Naive thymus-derived CD4-positive, alpha-beta T cell (primary cell): ENCODE measurements at regions of chr19 and their contacts with region 1.

Region 1: DNA sequence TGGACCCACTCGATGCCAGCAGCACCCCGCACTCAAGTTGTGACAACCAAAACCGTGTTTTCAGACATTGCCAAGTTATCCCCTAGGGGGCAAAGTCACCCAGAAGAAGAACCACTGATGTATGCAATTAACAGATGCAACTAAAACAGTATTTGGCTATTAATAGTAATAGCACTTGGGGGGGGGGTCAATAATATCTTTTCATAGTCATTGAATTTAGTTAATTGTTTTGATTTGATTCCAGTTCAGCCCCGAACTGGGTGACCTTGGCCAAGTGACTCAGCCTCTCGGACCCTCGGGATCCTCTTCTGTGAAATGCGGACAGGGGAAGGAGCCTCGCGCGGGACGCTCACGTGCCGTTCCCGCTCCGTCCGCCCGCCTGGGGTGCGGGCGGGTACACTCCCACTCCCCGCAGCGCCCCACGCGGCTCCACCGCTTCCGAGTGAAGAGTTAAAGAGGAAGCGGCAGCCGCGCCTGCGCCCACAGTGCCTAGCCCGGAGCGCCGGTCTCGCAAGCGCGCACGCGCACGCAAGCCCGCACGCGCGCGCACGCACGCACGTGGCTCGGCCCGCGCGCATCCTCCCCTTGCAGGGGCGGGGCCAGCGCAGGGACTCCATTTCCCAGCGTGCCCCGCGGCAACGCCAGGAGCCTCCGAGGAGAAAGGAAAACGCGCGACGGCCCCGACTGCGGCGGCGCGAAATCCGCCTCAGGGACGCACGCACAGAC is 449 bp upstream of the DAZAP1 start:
- DNase-seq: peak; percentile 99 to 100 (median 100)
- ATAC-seq: peak; percentile 93
- H3K4me3 ChIP-seq: peak overlapping the region; percentile 40
- H3K4me3 Mint-ChIP-seq: peak overlapping the region; percentile 72 to 89 (median 80)
- H3K27ac ChIP-seq: peak overlapping the region; percentile 98
- H3K27ac Mint-ChIP-seq: peak overlapping the region; percentile 50 to 93 (median 85)
- H3K4me1 ChIP-seq: peaks cover 38 to 40% of the 10 kb centered on the region in 2 donors
- H3K4me1 Mint-ChIP-seq: peaks cover 33 to 53% (median 45%) of the 10 kb centered on the region in 7 donors
- H3K27me3 ChIP-seq: no peaks in the 10 kb centered on the region
- H3K27me3 Mint-ChIP-seq: peaks cover 0 to 9% (median 0%) of the 10 kb centered on the region in 5 donors

Region 2: DNA sequence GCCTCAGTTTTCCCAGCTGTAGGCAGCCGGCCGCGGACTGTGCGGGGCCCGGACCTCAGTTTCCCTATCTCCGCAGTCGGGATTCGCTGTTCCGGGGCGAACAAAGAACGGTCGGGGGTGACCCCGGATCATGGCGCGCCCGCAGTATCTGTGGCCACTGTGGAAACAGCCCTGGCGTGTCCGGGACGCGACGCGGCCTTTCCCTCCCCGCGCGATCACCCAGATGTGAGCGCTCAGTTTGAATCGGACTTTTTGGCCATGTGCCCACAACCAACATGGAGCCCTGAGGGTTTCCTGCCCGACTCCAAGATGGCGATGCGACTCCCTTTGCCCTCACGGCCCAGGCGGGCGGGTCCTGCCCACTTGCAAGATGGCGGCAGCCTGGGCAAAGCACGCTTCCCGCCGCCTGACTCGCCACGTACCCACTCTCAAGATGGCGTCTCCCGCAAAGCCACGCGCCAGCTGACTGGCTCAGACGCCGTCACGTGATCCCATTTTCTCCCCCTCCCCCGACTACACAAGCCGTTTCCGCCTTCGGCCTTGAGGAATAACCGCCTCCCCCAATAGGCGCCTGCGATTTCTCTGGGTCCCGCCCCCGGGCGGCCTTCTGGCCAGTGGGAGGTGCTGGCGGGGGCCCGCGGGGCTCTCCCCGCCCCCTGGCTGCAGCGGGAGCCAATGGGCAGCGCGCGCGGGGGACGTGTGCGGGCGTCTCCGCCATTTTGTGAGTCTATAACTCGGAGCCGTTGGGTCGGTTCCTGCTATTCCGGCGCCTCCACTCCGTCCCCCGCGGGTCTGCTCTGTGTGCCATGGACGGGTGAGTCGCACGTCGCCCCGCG is 610.0 kb before region 1 on chr19 and contains the start of gene PTBP1:
- CTCF ChIA-PET with region 1: no interaction called
- POLR2A ChIA-PET with region 1: no interaction called
- intact Hi-C with region 1: loop called (anchors 1 to 2 kb)
- DNase-seq: peak; percentile 94 to 100 (median 100)
- ATAC-seq: peak; percentile 91
- H3K4me3 ChIP-seq: peak within 1 kb of the TSS; percentile 78
- H3K4me3 Mint-ChIP-seq: peak within 1 kb of the TSS; percentile 86 to 97 (median 94)
- H3K27ac ChIP-seq: peak within 1 kb of the TSS; percentile 78
- H3K27ac Mint-ChIP-seq: peak within 1 kb of the TSS; percentile 85 to 97 (median 92)
- H3K4me1 ChIP-seq: peaks cover 29 to 31% of the 10 kb centered on the region in 2 donors
- H3K4me1 Mint-ChIP-seq: peaks cover 26 to 36% (median 32%) of the 10 kb centered on the region in 7 donors
- H3K27me3 ChIP-seq: no peaks in the 10 kb centered on the region
- H3K27me3 Mint-ChIP-seq: peaks cover 0 to 2% (median 0%) of the 10 kb centered on the region in 5 donors
- total RNA-seq, gene PTBP1: 313 to 524 (median 326) TPM

Region 3: DNA sequence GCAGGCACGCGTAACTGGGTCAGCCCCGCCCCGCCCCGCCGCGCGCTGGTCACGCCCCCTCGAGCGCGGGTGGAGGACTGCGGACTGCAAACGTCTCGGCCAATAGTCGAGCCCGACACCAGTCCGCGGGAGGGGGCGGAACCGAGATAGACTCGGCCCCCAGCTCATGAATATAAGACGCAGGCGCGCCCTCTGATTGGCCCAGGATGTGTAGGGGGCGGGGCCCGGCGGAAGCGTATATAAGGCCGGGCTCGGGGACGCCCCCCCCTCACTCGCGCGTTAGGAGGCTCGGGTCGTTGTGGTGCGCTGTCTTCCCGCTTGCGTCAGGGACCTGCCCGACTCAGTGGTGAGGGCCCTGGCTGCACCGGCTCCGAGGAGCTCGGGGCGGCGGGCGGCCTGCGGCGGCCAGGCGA is 137.9 kb before region 1 on chr19 and contains the start of gene CIRBP:
- CTCF ChIA-PET with region 1: no interaction called
- POLR2A ChIA-PET with region 1: interaction called, 11 read pairs
- intact Hi-C with region 1: no loop called
- DNase-seq: peak; percentile 95 to 99 (median 98)
- ATAC-seq: peak; percentile 90
- H3K4me3 ChIP-seq: peak within 1 kb of the TSS; percentile 76
- H3K4me3 Mint-ChIP-seq: peak within 1 kb of the TSS; percentile 88 to 96 (median 90)
- H3K27ac ChIP-seq: peak within 1 kb of the TSS; percentile 82
- H3K27ac Mint-ChIP-seq: peak within 1 kb of the TSS; percentile 87 to 94 (median 91)
- H3K4me1 ChIP-seq: peaks cover 60 to 61% of the 10 kb centered on the region in 2 donors
- H3K4me1 Mint-ChIP-seq: peaks cover 52 to 76% (median 62%) of the 10 kb centered on the region in 7 donors
- H3K27me3 ChIP-seq: no peaks in the 10 kb centered on the region
- H3K27me3 Mint-ChIP-seq: peaks cover 0 to 6% (median 0%) of the 10 kb centered on the region in 5 donors
- total RNA-seq, gene CIRBP: 237 to 629 (median 524) TPM

Region 4: DNA sequence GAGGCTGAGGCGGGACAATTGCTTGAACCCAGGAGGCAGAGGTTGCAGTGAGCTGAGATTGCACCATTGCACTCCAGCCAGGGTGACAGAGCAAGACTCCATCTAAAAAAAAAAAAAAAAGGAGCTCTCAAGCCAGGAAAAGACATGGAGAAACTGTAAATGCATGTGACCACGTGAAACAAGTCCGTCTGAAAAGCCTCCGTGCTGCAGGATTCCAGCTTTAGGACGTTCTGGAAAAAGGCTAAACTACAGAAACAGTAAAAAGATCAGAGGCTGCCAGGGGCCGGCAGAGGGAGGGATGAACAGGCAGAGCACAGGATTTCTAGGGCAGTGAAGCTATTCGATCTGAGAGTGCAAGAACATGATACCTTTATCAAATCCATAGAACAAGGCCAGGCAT is 63.9 kb before region 1 on chr19:
- CTCF ChIA-PET with region 1: no interaction called
- POLR2A ChIA-PET with region 1: no interaction called
- intact Hi-C with region 1: no loop called
- DNase-seq: no peak
- ATAC-seq: no peak
- H3K4me3 ChIP-seq: no peak overlapping the region
- H3K4me3 Mint-ChIP-seq: peak overlapping the region in 2 of 10 donors; percentile 2 to 31
- H3K27ac ChIP-seq: no peak overlapping the region
- H3K27ac Mint-ChIP-seq: peak overlapping the region in 1 of 9 donors; percentile 33
- H3K4me1 ChIP-seq: no peaks in the 10 kb centered on the region
- H3K4me1 Mint-ChIP-seq: peaks cover 4 to 11% (median 5%) of the 10 kb centered on the region in 7 donors
- H3K27me3 ChIP-seq: no peaks in the 10 kb centered on the region
- H3K27me3 Mint-ChIP-seq: peaks cover 0 to 3% (median 0%) of the 10 kb centered on the region in 5 donors

Region 5: DNA sequence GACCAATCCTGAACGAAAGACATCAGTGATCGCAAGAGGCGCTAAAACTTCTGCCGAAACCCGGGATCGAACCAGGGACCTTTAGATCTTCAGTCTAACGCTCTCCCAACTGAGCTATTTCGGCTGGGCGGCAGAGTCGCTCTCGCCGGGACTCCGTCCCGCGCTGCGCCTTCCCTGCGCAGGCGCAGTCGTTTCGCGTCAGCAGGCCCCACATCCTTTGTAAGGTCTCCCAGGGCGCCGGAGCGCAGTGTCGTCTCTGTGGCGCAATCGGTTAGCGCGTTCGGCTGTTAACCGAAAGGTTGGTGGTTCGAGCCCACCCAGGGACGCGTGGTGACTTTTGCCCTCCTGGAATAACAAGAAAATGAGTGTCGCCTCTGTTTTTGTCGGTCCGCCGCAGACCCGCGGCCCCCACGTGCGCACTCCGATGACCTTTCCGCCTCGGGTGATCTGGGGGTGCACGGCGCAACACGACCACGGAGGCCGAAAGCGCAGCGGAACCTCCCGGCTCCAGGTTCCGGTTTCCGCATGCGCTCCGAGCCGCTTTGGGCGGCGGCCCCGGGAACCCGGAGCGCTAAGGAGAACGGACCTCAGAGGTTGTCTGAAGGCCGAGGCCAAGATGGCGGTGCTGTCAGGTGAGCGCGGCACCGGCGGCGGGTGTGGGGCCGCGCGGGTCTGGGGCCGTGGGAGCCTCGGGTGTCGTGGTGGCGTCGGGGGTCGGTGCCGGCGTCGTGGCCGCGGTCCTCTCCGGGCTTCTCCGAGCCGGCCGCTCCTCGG is 23.4 kb before region 1 on chr19 and contains the start of gene NDUFS7:
- CTCF ChIA-PET with region 1: no interaction called
- POLR2A ChIA-PET with region 1: interaction called, 4 read pairs
- intact Hi-C with region 1: loop called (anchors 1 kb)
- DNase-seq: peak; percentile 87 to 100 (median 95)
- ATAC-seq: peak; percentile 95
- H3K4me3 ChIP-seq: peak within 1 kb of the TSS; percentile 92
- H3K4me3 Mint-ChIP-seq: peak within 1 kb of the TSS; percentile 87 to 99 (median 94)
- H3K27ac ChIP-seq: peak within 1 kb of the TSS; percentile 76
- H3K27ac Mint-ChIP-seq: peak within 1 kb of the TSS; percentile 98 to 100 (median 100)
- H3K4me1 ChIP-seq: peaks cover 5 to 9% of the 10 kb centered on the region in 2 donors
- H3K4me1 Mint-ChIP-seq: peaks cover 12 to 31% (median 22%) of the 10 kb centered on the region in 7 donors
- H3K27me3 ChIP-seq: no peaks in the 10 kb centered on the region
- H3K27me3 Mint-ChIP-seq: peaks cover 0 to 10% (median 3%) of the 10 kb centered on the region in 5 donors
- total RNA-seq, gene NDUFS7: 48.4 to 101 (median 68.0) TPM

Region 6: GRCh38 chr19:1490311-1491113 is 83.6 kb after region 1 on chr19 and contains the start of gene PCSK4:
- CTCF ChIA-PET with region 1: no interaction called
- POLR2A ChIA-PET with region 1: interaction called, 3 read pairs
- intact Hi-C with region 1: loop called in 1 of 2 experiments (anchors 1 kb)
- DNase-seq: peak; percentile 84 to 99 (median 98)
- ATAC-seq: peak; percentile 93
- H3K4me3 ChIP-seq: peak within 1 kb of the TSS; percentile 77
- H3K4me3 Mint-ChIP-seq: peak within 1 kb of the TSS; percentile 83 to 94 (median 92)
- H3K27ac ChIP-seq: peak within 1 kb of the TSS; percentile 63
- H3K27ac Mint-ChIP-seq: peak within 1 kb of the TSS; percentile 83 to 96 (median 86)
- H3K4me1 ChIP-seq: peaks cover 9 to 10% of the 10 kb centered on the region in 2 donors
- H3K4me1 Mint-ChIP-seq: peaks cover 7 to 17% (median 15%) of the 10 kb centered on the region in 7 donors
- H3K27me3 ChIP-seq: no peaks in the 10 kb centered on the region
- H3K27me3 Mint-ChIP-seq: peaks cover 0 to 14% (median 0%) of the 10 kb centered on the region in 5 donors
- total RNA-seq, gene PCSK4: 0.87 to 10.8 (median 7.8) TPM

Region 7: DNA sequence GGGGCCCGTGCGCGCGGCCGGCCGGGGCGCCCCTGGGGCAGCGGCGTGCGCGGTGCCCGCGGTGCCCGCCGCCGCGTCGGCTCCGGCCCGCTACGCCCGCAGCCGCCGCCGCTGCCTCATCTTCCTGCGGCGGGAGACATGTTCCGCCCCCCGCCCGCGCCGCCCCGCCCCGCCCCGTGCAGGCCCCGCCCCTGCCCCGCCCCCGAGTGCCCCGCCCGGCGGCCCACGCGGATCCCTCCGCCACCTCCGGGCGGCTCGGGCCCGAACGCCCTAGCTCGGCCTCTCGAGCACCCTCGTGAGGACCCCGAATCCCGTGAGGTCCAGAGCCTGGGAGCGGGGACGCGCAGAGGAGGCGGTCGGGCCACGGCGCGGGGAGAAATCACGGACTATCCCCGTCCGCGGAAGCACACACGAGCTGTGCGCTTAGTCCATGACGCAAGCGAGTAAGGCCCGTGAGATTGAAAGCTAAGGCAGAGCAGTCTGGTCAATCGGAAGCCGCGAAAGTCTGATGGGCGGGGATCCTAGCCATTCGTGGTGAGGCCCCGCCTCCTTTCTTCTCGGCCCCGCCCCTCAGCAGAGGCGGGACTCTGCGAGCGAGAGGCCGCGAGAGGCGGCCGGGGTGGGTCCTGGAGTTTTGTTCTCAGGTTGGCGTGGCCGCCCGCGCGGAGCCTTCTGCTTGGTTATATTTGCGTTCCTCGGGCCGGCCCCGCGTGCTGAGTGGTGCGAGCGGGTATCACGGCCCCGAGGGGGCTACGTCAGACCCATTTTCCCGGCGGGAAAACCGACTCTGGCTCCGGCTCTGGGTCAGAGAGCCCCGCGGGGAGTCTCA is 245.7 kb after region 1 on chr19 and contains the start of gene TCF3:
- CTCF ChIA-PET with region 1: no interaction called
- POLR2A ChIA-PET with region 1: no interaction called
- intact Hi-C with region 1: loop called in 1 of 2 experiments (anchors 2 kb)
- DNase-seq: peak; percentile 96 to 100 (median 99)
- ATAC-seq: peak; percentile 96
- H3K4me3 ChIP-seq: peak within 1 kb of the TSS; percentile 86
- H3K4me3 Mint-ChIP-seq: peak within 1 kb of the TSS; percentile 86 to 96 (median 91)
- H3K27ac ChIP-seq: peak within 1 kb of the TSS; percentile 99
- H3K27ac Mint-ChIP-seq: peak within 1 kb of the TSS; percentile 87 to 98 (median 95)
- H3K4me1 ChIP-seq: peaks cover 4 to 8% of the 10 kb centered on the region in 2 donors
- H3K4me1 Mint-ChIP-seq: peaks cover 7 to 14% (median 10%) of the 10 kb centered on the region in 7 donors
- H3K27me3 ChIP-seq: no peaks in the 10 kb centered on the region
- H3K27me3 Mint-ChIP-seq: peaks cover 0 to 4% (median 0%) of the 10 kb centered on the region in 5 donors
- total RNA-seq, gene TCF3: 66.6 to 83.6 (median 78.3) TPM

Region 8: GRCh38 chr19:2900296-2901252 is 1493.6 kb after region 1 on chr19 and contains the start of gene ZNF57:
- CTCF ChIA-PET with region 1: no interaction called
- POLR2A ChIA-PET with region 1: no interaction called
- intact Hi-C with region 1: loop called in 1 of 2 experiments (anchors 5 kb)
- DNase-seq: peak; percentile 83 to 98 (median 96)
- ATAC-seq: peak; percentile 99
- H3K4me3 ChIP-seq: peak within 1 kb of the TSS; percentile 79
- H3K4me3 Mint-ChIP-seq: peak within 1 kb of the TSS; percentile 88 to 99 (median 96)
- H3K27ac ChIP-seq: peak within 1 kb of the TSS; percentile 63
- H3K27ac Mint-ChIP-seq: peak within 1 kb of the TSS; percentile 55 to 91 (median 85)
- H3K4me1 ChIP-seq: peaks cover 0 to 4% of the 10 kb centered on the region in 2 donors
- H3K4me1 Mint-ChIP-seq: peaks cover 11 to 28% (median 21%) of the 10 kb centered on the region in 7 donors
- H3K27me3 ChIP-seq: no peaks in the 10 kb centered on the region
- H3K27me3 Mint-ChIP-seq: no peaks in the 10 kb centered on the region
- total RNA-seq, gene ZNF57: 1.7 to 5.0 (median 2.2) TPM